CD4-positive, alpha-beta memory T cell (primary cell): ENCODE measurements at regions of chr2 and their contacts with region 1.

Region 1: GRCh38 chr2:177772529-177772928 is 300.0 kb downstream of the PDE11A start:
- DNase-seq: peak; percentile 14 to 45 (median 24)
- H3K4me3 ChIP-seq: no peak overlapping the region
- H3K4me3 Mint-ChIP-seq: no peak overlapping the region
- H3K27ac ChIP-seq: no peak overlapping the region
- H3K27ac Mint-ChIP-seq: no peak overlapping the region
- H3K4me1 ChIP-seq: no peaks in the 10 kb centered on the region
- H3K4me1 Mint-ChIP-seq: peaks cover 0 to 2% (median 0%) of the 10 kb centered on the region in 4 donors
- H3K27me3 ChIP-seq: no peaks in the 10 kb centered on the region
- H3K27me3 Mint-ChIP-seq: peaks cover 3 to 6% of the 10 kb centered on the region in 2 donors

Region 2: GRCh38 chr2:177783835-177784744 is 11.6 kb after region 1 on chr2:
- CTCF ChIA-PET with region 1: interaction called, 10 read pairs
- POLR2A ChIA-PET with region 1: no interaction called
- intact Hi-C with region 1: no loop called
- DNase-seq: peak in 4 of 5 donors; percentile 22 to 46 (median 30)
- H3K4me3 ChIP-seq: peak overlapping the region in 1 of 2 donors; percentile 19
- H3K4me3 Mint-ChIP-seq: peak overlapping the region in 6 of 8 donors; percentile 30 to 72 (median 58)
- H3K27ac ChIP-seq: no peak overlapping the region
- H3K27ac Mint-ChIP-seq: peak overlapping the region in 5 of 7 donors; percentile 25 to 69 (median 35)
- H3K4me1 ChIP-seq: peaks cover 25% of the 10 kb centered on the region
- H3K4me1 Mint-ChIP-seq: peaks cover 4 to 39% (median 23%) of the 10 kb centered on the region in 4 donors
- H3K27me3 ChIP-seq: no peaks in the 10 kb centered on the region
- H3K27me3 Mint-ChIP-seq: peaks cover 0 to 12% of the 10 kb centered on the region in 2 donors

Region 3: GRCh38 chr2:177799531-177799930 is 27.0 kb after region 1 on chr2:
- CTCF ChIA-PET with region 1: interaction called, 31 read pairs
- POLR2A ChIA-PET with region 1: no interaction called
- intact Hi-C with region 1: no loop called
- DNase-seq: no peak
- H3K4me3 ChIP-seq: no peak overlapping the region
- H3K4me3 Mint-ChIP-seq: no peak overlapping the region
- H3K27ac ChIP-seq: no peak overlapping the region
- H3K27ac Mint-ChIP-seq: no peak overlapping the region
- H3K4me1 ChIP-seq: no peaks in the 10 kb centered on the region
- H3K4me1 Mint-ChIP-seq: no peaks in the 10 kb centered on the region
- H3K27me3 ChIP-seq: no peaks in the 10 kb centered on the region
- H3K27me3 Mint-ChIP-seq: peaks cover 10 to 15% of the 10 kb centered on the region in 2 donors

Region 4: DNA sequence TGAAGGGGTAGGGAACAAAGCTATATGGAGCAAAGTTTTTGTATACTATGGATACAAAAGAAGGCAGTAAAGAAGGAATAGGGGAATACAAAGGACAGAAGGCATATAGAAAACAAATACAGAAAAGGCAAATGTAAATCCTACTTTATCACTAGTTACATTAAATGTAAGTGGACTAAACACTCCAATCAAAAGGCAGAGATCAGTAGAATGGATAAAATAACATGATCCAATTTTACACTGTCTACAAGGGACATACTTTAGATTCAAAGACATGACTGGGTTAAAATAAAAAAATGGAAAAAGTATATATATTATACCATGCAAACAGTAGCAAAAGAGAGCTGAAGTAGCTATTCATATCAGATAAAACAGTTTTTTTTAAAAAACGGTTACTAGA is 85.0 kb after region 1 on chr2:
- CTCF ChIA-PET with region 1: no interaction called
- POLR2A ChIA-PET with region 1: no interaction called
- intact Hi-C with region 1: loop called (anchors 2 kb)
- DNase-seq: no peak
- H3K4me3 ChIP-seq: no peak overlapping the region
- H3K4me3 Mint-ChIP-seq: no peak overlapping the region
- H3K27ac ChIP-seq: no peak overlapping the region
- H3K27ac Mint-ChIP-seq: no peak overlapping the region
- H3K4me1 ChIP-seq: no peaks in the 10 kb centered on the region
- H3K4me1 Mint-ChIP-seq: no peaks in the 10 kb centered on the region
- H3K27me3 ChIP-seq: no peaks in the 10 kb centered on the region
- H3K27me3 Mint-ChIP-seq: peaks cover 0 to 10% of the 10 kb centered on the region in 2 donors

Region 5: GRCh38 chr2:177906041-177906718 is 133.7 kb after region 1 on chr2:
- CTCF ChIA-PET with region 1: interaction called, 4 read pairs
- POLR2A ChIA-PET with region 1: no interaction called
- intact Hi-C with region 1: loop called (anchors 1 kb)
- DNase-seq: peak; percentile 36 to 45 (median 39)
- H3K4me3 ChIP-seq: no peak overlapping the region
- H3K4me3 Mint-ChIP-seq: peak overlapping the region in 1 of 8 donors; percentile 17
- H3K27ac ChIP-seq: no peak overlapping the region
- H3K27ac Mint-ChIP-seq: no peak overlapping the region
- H3K4me1 ChIP-seq: peaks cover 6% of the 10 kb centered on the region
- H3K4me1 Mint-ChIP-seq: peaks cover 0 to 7% (median 1%) of the 10 kb centered on the region in 4 donors
- H3K27me3 ChIP-seq: no peaks in the 10 kb centered on the region
- H3K27me3 Mint-ChIP-seq: peaks cover 0 to 3% of the 10 kb centered on the region in 2 donors

Region 6: GRCh38 chr2:177983183-177983788 is 210.8 kb after region 1 on chr2:
- CTCF ChIA-PET with region 1: no interaction called
- POLR2A ChIA-PET with region 1: no interaction called
- intact Hi-C with region 1: loop called (anchors 5 kb)
- DNase-seq: no peak
- H3K4me3 ChIP-seq: no peak overlapping the region
- H3K4me3 Mint-ChIP-seq: no peak overlapping the region
- H3K27ac ChIP-seq: no peak overlapping the region
- H3K27ac Mint-ChIP-seq: no peak overlapping the region
- H3K4me1 ChIP-seq: no peaks in the 10 kb centered on the region
- H3K4me1 Mint-ChIP-seq: no peaks in the 10 kb centered on the region
- H3K27me3 ChIP-seq: no peaks in the 10 kb centered on the region
- H3K27me3 Mint-ChIP-seq: peaks cover 2 to 7% of the 10 kb centered on the region in 2 donors